Tibial artery (tissue), 4 donors: ENCODE measurements at regions of chr16 and their contacts with region 1.

Region 1: DNA sequence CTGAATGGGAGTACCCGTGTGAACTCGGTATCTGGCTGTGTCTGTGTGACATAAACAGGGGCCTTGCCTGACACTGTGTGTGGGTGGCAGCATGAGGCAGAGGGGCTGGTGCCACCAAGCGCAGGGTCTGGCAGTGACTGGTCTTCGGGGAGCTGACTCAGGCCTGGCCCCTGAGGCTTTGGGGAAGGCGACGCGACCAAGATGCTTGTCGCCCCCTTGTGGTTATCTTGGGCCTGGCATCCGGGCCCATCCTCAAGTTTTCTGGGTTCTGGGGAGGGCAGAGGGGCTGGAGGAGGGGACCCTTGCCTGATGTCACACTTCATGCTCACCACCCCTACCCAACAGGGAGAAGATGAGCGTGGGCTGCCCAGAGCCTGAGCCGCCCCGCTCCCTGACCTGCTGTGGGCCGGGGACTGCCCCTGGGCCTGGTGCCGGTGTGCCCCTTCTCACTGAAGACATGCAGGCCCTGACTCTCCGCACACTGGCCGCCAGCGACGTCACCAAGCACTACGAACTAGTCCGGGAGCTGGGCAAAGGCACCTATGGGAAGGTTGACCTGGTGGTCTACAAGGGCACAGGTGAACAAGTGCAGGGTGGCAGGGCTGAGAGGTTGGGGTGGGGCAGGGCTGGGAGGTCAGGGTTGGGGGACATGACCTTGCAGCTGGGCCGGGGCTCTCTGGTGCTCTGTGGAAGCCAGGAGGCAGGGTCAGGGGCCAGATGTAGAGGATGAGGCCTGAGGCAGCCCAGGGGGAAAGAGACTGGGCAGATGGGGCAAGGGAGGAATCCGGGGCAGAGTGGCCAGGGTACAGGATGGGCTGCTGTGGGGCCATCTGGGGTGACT is 24.9 kb downstream of the SBK1 start:
- DNase-seq: peak in 1 of 2 donors; percentile 30
- H3K4me3 ChIP-seq: no peak overlapping the region
- H3K27ac ChIP-seq: no peak overlapping the region
- H3K4me1 ChIP-seq: no peaks in the 10 kb centered on the region
- H3K27me3 ChIP-seq: peaks cover 0 to 26% of the 10 kb centered on the region in 2 donors
- CTCF ChIP-seq: peak; percentile 63 to 70

Region 2: DNA sequence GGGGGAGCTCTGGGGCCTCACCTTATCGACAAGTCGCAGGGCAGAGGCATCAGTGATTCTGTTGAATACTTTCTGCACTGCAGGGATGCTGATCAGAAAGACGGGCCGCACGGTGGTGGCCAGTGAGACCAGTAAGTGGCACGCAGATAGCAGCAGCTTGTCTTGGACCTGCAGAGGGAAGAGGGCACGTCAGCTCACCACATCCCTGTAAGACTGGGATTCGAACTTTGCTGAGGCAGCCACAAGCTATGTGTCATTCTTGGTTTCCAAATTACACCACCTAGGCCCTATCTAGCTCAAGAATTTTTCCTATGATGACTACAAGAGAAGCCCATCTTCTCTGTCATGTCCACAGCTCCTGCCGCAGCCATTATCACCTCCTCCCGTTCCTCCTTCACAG is 204.4 kb before region 1 on chr16:
- intact Hi-C with region 1: no loop called
- DNase-seq: no peak
- H3K4me3 ChIP-seq: no peak overlapping the region
- H3K27ac ChIP-seq: no peak overlapping the region
- H3K4me1 ChIP-seq: no peaks in the 10 kb centered on the region
- H3K27me3 ChIP-seq: no peaks in the 10 kb centered on the region
- CTCF ChIP-seq: no peak

Region 3: DNA sequence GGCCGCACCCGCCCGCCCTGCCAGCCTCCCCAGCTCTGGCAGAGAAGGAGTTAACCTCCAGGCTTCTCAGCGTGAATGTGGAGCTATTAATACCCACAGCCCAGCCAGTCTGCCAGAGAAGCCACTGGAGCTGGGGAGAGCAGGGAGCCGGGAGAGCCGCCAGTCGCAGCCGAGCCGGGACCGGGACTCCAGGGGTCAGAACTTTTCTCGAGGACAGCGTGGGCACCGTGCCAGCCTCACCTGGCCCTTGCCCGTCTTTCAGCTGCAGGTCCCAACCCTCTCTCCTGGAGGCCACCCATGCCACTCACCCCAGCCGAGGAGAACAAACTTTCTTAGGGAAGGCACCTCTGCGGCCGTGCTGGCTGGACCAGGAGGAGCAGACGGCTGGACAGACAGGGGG is 58.7 kb before region 1 on chr16:
- intact Hi-C with region 1: no loop called
- DNase-seq: no peak
- H3K4me3 ChIP-seq: peak overlapping the region in 1 of 2 donors; percentile 35
- H3K27ac ChIP-seq: no peak overlapping the region
- H3K4me1 ChIP-seq: peaks cover 0 to 14% (median 13%) of the 10 kb centered on the region in 4 donors
- H3K27me3 ChIP-seq: peaks cover 0 to 51% of the 10 kb centered on the region in 2 donors
- CTCF ChIP-seq: no peak

Region 4: GRCh38 chr16:28277537-28278388 is 39.5 kb before region 1 on chr16:
- intact Hi-C with region 1: loop called (anchors 5 kb)
- DNase-seq: peak; percentile 84 to 85
- H3K4me3 ChIP-seq: peak overlapping the region; percentile 23 to 45
- H3K27ac ChIP-seq: no peak overlapping the region
- H3K4me1 ChIP-seq: peaks cover 0 to 9% (median 6%) of the 10 kb centered on the region in 4 donors
- H3K27me3 ChIP-seq: peaks cover 0 to 63% of the 10 kb centered on the region in 2 donors
- CTCF ChIP-seq: peak; percentile 94 to 97